Calu3 (cell line): ENCODE measurements at regions of chr11 and their contacts with region 1.

Region 1: DNA sequence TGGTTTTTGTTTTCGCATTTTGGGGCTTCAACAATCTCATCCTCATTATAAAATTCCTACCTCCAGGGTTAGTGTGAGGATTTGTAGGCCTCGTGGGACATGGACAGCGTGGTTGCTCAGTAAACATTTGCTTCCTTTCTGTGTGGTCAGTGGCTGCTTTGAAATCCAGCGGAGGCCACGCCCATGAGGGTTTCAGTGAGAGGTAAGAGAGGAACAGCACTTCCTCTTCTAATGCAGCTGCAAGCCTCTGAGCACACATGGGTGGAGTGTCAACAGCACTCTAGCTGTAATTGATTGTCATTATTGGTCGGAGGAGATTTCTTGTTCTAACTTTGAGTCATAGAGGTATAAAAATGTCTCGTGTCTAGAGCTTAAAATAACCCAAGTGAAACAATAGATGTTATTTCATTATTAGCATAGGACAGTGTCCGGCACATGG is 6.0 kb upstream of the ARHGAP42 start:
- DNase-seq: peak; percentile 74
- H3K4me3 Mint-ChIP-seq: no peak overlapping the region
- H3K27ac Mint-ChIP-seq: peak overlapping the region; percentile 60
- H3K4me1 Mint-ChIP-seq: peaks cover 31% of the 10 kb centered on the region
- H3K27me3 Mint-ChIP-seq: no peaks in the 10 kb centered on the region
- CTCF ChIP-seq: no peak

Region 2: DNA sequence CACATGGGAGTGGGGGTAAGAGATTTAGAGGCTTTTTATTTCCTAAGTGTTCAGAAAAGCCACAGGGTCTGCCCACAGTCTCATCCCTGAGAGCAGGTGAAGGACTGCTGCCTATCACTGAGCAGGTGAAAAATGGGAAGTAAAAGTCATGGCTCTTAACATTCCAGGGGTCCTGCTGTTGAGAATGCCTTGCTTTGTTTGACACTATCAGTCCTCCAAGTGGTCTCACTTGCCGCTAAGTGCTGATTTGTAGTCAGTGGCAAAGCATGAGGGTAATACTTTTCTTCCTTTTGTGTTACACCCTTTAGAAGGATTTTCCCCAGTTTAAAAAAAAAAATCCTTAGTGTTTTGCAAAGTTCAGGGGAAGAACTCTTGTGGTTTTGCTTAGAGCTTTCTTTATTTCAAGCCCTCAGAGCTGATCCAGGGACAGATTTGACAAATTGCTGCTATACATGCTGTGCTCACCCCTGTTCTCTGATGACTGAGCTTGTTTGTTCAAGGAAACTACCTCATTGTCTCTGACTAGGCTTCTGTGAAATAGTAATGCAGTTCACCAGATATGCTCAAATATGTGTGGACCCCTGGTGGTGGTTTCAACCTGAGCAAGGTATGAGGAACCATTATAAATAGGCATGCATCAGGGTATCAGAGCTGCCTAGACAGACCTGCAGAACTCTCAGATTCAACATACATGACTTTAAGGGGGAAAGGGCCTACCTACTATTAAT is 147.0 kb after region 1 on chr11:
- CTCF ChIA-PET with region 1: interaction called, 23 read pairs
- intact Hi-C with region 1: loop called (anchors 1 kb)
- DNase-seq: peak; percentile 68
- H3K4me3 Mint-ChIP-seq: no peak overlapping the region
- H3K27ac Mint-ChIP-seq: peak overlapping the region; percentile 83
- H3K4me1 Mint-ChIP-seq: peaks cover 26% of the 10 kb centered on the region
- H3K27me3 Mint-ChIP-seq: no peaks in the 10 kb centered on the region
- CTCF ChIP-seq: no peak

Region 3: DNA sequence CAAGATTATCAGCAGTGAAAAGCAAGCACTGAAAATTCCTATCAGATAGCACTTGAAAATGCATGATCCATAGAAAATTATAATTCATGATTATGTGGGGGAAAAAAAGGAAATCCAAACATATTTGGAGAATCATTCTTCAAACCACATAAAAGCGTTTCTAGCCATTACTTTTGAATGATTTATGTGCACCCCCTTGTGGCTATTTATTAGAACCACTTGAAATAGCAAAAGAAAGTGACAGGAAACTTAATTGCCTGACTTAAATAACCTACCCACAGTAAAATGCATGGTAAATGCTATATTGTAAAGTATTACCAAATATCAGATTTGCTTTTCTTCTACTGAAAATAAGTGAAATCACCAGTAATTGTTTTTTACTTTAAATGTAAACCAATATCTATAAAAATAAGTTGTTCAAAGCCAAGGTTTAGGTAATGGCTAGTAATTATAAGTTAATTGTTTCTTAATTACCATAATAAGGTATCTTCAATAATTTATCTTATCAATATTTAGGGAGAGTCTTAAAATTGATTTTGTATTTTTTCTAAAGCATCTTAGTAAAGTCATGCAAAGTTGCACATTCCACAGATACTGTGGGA is 174.5 kb after region 1 on chr11:
- CTCF ChIA-PET with region 1: interaction called, 6 read pairs
- intact Hi-C with region 1: loop called (anchors 1 kb)
- DNase-seq: no peak
- H3K4me3 Mint-ChIP-seq: no peak overlapping the region
- H3K27ac Mint-ChIP-seq: no peak overlapping the region
- H3K4me1 Mint-ChIP-seq: peaks cover 36% of the 10 kb centered on the region
- H3K27me3 Mint-ChIP-seq: no peaks in the 10 kb centered on the region
- CTCF ChIP-seq: no peak

Region 4: DNA sequence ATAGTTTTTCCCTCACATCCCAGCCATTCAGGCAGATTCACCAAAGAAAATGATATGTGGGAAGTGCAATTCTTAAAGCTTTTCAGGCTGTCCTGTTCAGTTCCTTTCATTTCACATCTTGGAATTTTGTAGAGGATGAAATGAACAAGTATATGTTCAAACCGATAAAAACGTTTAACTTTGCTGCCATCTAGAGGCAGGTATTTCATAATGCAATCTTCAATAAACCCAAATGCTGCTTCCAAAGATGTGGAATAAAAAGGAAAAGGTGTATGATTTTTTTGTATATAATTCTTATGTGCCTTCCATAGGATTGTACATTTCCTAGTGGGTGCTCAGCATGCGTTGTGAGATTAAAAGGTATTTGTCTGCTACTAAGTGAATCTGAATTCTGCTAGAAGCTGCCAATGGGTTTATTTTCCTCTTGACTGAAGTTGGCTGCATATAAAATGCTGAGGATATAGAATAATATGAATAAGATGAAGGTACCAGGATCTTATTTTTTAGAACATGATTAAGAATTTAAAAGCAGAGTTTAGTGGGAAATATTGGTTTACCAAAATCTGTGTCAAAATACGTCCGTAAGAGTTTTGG is 249.2 kb after region 1 on chr11:
- CTCF ChIA-PET with region 1: no interaction called
- intact Hi-C with region 1: loop called (anchors 2 kb)
- DNase-seq: peak; percentile 1
- H3K4me3 Mint-ChIP-seq: no peak overlapping the region
- H3K27ac Mint-ChIP-seq: no peak overlapping the region
- H3K4me1 Mint-ChIP-seq: no peaks in the 10 kb centered on the region
- H3K27me3 Mint-ChIP-seq: no peaks in the 10 kb centered on the region
- CTCF ChIP-seq: no peak